ENCODE measurements at regions of chr2 and their contacts with region 1.

Region 1: GRCh38 chr2:196076778-196077568 is 8.3 kb upstream of the DNAH7 start:
- DNase-seq: no peak
- ATAC-seq: no peak
- H3K4me3 ChIP-seq: no peak overlapping the region
- H3K4me3 Mint-ChIP-seq: no peak overlapping the region
- H3K27ac ChIP-seq: no peak overlapping the region
- H3K27ac Mint-ChIP-seq: no peak overlapping the region
- H3K4me1 ChIP-seq: peaks cover 9 to 13% of the 10 kb centered on the region in 2 donors
- H3K4me1 Mint-ChIP-seq: peaks cover 10 to 34% (median 25%) of the 10 kb centered on the region in 7 donors
- H3K27me3 ChIP-seq: no peaks in the 10 kb centered on the region
- H3K27me3 Mint-ChIP-seq: no peaks in the 10 kb centered on the region

Region 2: DNA sequence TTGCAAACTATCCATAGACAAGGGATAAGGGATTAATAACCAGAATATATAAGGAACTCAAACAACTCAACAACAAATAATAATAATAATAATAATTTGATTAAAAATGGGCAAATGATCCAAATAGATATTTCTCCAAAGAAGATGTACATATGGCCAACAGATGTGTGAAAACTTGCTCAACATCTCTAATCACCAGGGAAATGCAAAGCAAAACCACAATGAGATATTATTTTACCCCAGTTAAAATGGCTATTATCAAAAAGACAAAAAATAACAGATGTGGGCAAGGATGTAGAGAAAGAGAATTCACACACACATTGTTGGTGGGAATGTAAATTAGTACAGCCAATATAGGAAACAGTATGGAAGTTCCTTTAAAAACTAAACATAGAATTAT is 35.2 kb before region 1 on chr2:
- CTCF ChIA-PET with region 1: no interaction called
- POLR2A ChIA-PET with region 1: no interaction called
- intact Hi-C with region 1: no loop called
- DNase-seq: no peak
- ATAC-seq: no peak
- H3K4me3 ChIP-seq: no peak overlapping the region
- H3K4me3 Mint-ChIP-seq: no peak overlapping the region
- H3K27ac ChIP-seq: no peak overlapping the region
- H3K27ac Mint-ChIP-seq: no peak overlapping the region
- H3K4me1 ChIP-seq: no peaks in the 10 kb centered on the region
- H3K4me1 Mint-ChIP-seq: peaks cover 0 to 13% (median 8%) of the 10 kb centered on the region in 7 donors
- H3K27me3 ChIP-seq: no peaks in the 10 kb centered on the region
- H3K27me3 Mint-ChIP-seq: peaks cover 11 to 22% (median 17%) of the 10 kb centered on the region in 5 donors

Region 3: GRCh38 chr2:196131384-196131937 is 54.5 kb after region 1 on chr2:
- CTCF ChIA-PET with region 1: no interaction called
- POLR2A ChIA-PET with region 1: no interaction called
- intact Hi-C with region 1: loop called (anchors 1 kb)
- DNase-seq: peak in 4 of 9 donors; percentile 30 to 57 (median 50)
- ATAC-seq: peak; percentile 58
- H3K4me3 ChIP-seq: no peak overlapping the region
- H3K4me3 Mint-ChIP-seq: peak overlapping the region in 3 of 10 donors; percentile 1 to 36 (median 32)
- H3K27ac ChIP-seq: no peak overlapping the region
- H3K27ac Mint-ChIP-seq: peak overlapping the region in 8 of 9 donors; percentile 63 to 91 (median 79)
- H3K4me1 ChIP-seq: no peaks in the 10 kb centered on the region
- H3K4me1 Mint-ChIP-seq: peaks cover 0 to 27% (median 16%) of the 10 kb centered on the region in 7 donors
- H3K27me3 ChIP-seq: no peaks in the 10 kb centered on the region
- H3K27me3 Mint-ChIP-seq: no peaks in the 10 kb centered on the region

Region 4: GRCh38 chr2:196239622-196240587 is 162.9 kb after region 1 on chr2:
- CTCF ChIA-PET with region 1: interaction called, 4 read pairs
- POLR2A ChIA-PET with region 1: no interaction called
- intact Hi-C with region 1: loop called in 1 of 2 experiments (anchors 1 kb)
- DNase-seq: peak; percentile 33 to 90 (median 83)
- ATAC-seq: peak; percentile 87
- H3K4me3 ChIP-seq: peak overlapping the region; percentile 36
- H3K4me3 Mint-ChIP-seq: peak overlapping the region; percentile 64 to 87 (median 76)
- H3K27ac ChIP-seq: peak overlapping the region; percentile 71
- H3K27ac Mint-ChIP-seq: peak overlapping the region; percentile 90 to 99 (median 97)
- H3K4me1 ChIP-seq: peaks cover 57 to 60% of the 10 kb centered on the region in 2 donors
- H3K4me1 Mint-ChIP-seq: peaks cover 55 to 90% (median 80%) of the 10 kb centered on the region in 7 donors
- H3K27me3 ChIP-seq: no peaks in the 10 kb centered on the region
- H3K27me3 Mint-ChIP-seq: no peaks in the 10 kb centered on the region

Region 5: DNA sequence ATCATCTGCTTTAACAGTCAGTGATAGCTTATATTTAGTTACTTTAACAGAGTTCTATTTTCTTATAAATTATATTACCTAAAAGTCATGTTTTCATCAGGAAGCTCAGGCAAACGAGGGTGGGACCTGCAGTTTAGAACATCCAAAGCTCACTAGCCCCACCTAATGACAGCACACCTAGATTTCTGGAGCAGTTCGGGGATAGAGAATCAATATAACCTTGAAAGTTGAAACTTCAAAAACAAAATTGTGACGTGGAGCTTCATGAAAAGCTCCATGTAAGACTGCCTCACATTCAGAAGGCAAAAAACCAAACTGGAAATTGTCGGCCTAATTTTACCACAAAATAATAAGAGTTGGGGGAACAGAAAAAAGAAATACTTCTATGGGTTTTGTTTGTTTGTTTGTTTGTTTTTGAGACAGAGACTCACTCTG is 376.7 kb after region 1 on chr2:
- CTCF ChIA-PET with region 1: interaction called, 14 read pairs
- POLR2A ChIA-PET with region 1: no interaction called
- intact Hi-C with region 1: loop called (anchors 1 kb)
- DNase-seq: peak in 7 of 9 donors; percentile 2 to 39 (median 19)
- ATAC-seq: peak; percentile 60
- H3K4me3 ChIP-seq: no peak overlapping the region
- H3K4me3 Mint-ChIP-seq: no peak overlapping the region
- H3K27ac ChIP-seq: no peak overlapping the region
- H3K27ac Mint-ChIP-seq: no peak overlapping the region
- H3K4me1 ChIP-seq: no peaks in the 10 kb centered on the region
- H3K4me1 Mint-ChIP-seq: peaks cover 0 to 6% (median 0%) of the 10 kb centered on the region in 7 donors
- H3K27me3 ChIP-seq: peaks cover 0 to 6% of the 10 kb centered on the region in 2 donors
- H3K27me3 Mint-ChIP-seq: peaks cover 25 to 42% (median 31%) of the 10 kb centered on the region in 5 donors

Measured in naive thymus-derived CD4-positive, alpha-beta T cell (primary cell).